HepG2 (cell line): ENCODE measurements at regions of chr20 and their contacts with region 1.

Region 1: DNA sequence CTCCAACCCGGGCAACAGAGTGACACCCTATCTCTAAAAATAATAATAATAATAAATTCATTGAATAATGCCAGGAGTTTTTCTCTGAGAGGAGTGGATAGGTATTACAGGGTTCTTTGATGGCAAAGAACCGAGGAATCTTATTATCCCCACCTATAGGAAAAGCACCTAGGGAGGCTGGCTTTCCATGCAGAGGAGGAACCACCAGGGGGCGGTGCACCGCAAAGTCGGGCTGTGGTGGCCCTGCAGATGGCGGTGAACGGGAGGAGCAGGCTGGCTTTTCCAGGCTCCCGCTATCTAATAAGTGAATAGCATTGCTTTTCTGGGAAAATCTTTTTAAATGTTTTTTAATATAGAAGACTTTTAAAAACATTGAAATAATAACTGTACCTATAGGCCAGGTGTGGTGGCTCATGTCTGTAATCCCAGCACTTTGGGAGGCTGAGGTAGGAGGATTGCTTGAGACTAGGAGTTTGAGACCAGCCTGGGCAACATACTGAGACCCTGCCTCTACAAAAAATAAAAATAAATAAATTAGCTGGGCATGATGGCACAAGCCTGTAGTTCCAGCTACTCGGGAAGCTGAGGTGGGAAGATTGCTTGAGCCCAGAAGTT is 864.2 kb downstream of the KIF16B start:
- DNase-seq: peak; percentile 52
- ATAC-seq: peak; percentile 99
- H3K4me3 ChIP-seq: no peak overlapping the region
- H3K27ac ChIP-seq: no peak overlapping the region
- H3K4me1 ChIP-seq: no peaks in the 10 kb centered on the region
- H3K27me3 ChIP-seq: no peaks in the 10 kb centered on the region
- CTCF ChIP-seq: peak; percentile 83
- EP300 ChIP-seq: no peak
- POLR2A ChIP-seq: no peak
- RAD21 ChIP-seq: peak; percentile 76

Region 2: DNA sequence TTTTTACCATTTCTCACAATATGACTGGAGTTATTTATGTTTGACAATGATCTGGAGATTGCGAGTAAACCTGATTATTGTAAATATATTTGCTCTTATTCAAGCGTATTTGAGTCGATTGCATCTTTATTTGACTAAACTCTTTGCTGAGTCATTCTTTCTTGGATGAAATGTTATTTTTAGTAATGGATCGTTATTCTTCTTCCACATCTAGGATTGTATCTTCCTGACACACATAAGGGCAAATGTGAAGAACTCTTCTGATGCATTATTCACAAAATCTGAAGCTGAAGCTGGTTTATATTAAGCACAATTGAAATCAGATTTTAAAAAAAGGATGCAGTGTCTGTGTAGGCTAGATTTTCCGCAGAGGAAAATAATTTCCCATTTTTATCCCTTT is 1786.8 kb before region 1 on chr20:
- CTCF ChIA-PET with region 1: no interaction called
- POLR2A ChIA-PET with region 1: no interaction called
- in situ Hi-C with region 1: no loop called
- intact Hi-C with region 1: no loop called
- DNase-seq: no peak
- ATAC-seq: no peak
- H3K4me3 ChIP-seq: no peak overlapping the region
- H3K27ac ChIP-seq: no peak overlapping the region
- H3K4me1 ChIP-seq: no peaks in the 10 kb centered on the region
- H3K27me3 ChIP-seq: peaks cover 1 to 4% of the 10 kb centered on the region in 2 experiments; a peak in 4 of 5 replicates
- CTCF ChIP-seq: no peak
- EP300 ChIP-seq: no peak
- POLR2A ChIP-seq: no peak
- RAD21 ChIP-seq: no peak

Region 3: GRCh38 chr20:16236589-16237241 is 527.6 kb after region 1 on chr20:
- CTCF ChIA-PET with region 1: interaction called, 4 read pairs
- POLR2A ChIA-PET with region 1: no interaction called
- in situ Hi-C with region 1: loop called (anchors 10 kb)
- intact Hi-C with region 1: no loop called
- DNase-seq: no peak
- ATAC-seq: no peak
- H3K4me3 ChIP-seq: no peak overlapping the region
- H3K27ac ChIP-seq: no peak overlapping the region
- H3K4me1 ChIP-seq: no peaks in the 10 kb centered on the region
- H3K27me3 ChIP-seq: no peaks in the 10 kb centered on the region
- CTCF ChIP-seq: no peak
- EP300 ChIP-seq: no peak
- POLR2A ChIP-seq: no peak
- RAD21 ChIP-seq: no peak

Region 4: GRCh38 chr20:16241915-16242314 is 532.8 kb after region 1 on chr20:
- CTCF ChIA-PET with region 1: interaction called, 4 read pairs
- POLR2A ChIA-PET with region 1: no interaction called
- in situ Hi-C with region 1: loop called (anchors 10 kb)
- intact Hi-C with region 1: loop called (anchors 1 kb)
- DNase-seq: peak; percentile 72
- ATAC-seq: peak; percentile 87
- H3K4me3 ChIP-seq: no peak overlapping the region
- H3K27ac ChIP-seq: no peak overlapping the region
- H3K4me1 ChIP-seq: 0 out of 2 replicates have a peak, but pooled peaks cover 4% of the 10 kb centered on the region
- H3K27me3 ChIP-seq: no peaks in the 10 kb centered on the region
- CTCF ChIP-seq: peak; percentile 82
- EP300 ChIP-seq: no peak
- POLR2A ChIP-seq: no peak
- RAD21 ChIP-seq: no peak